Mucosa of descending colon (tissue), 3 donors: ENCODE measurements at regions of chr10 and their contacts with region 1.

Region 1: GRCh38 chr10:114876602-114877300 is 55.2 kb downstream of the FHIP2A start:
- DNase-seq: peak in 2 of 3 donors; percentile 64 to 67
- ATAC-seq: peak; percentile 74
- H3K4me3 ChIP-seq: no peak overlapping the region
- H3K4me1 ChIP-seq: peaks cover 6% of the 10 kb centered on the region
- CTCF ChIP-seq: peak; percentile 28

Region 2: GRCh38 chr10:115129752-115130151 is 253.0 kb after region 1 on chr10:
- intact Hi-C with region 1: loop called in 1 of 2 experiments (anchors 10 kb)
- DNase-seq: no peak
- ATAC-seq: no peak
- H3K4me3 ChIP-seq: no peak overlapping the region
- H3K4me1 ChIP-seq: no peaks in the 10 kb centered on the region
- CTCF ChIP-seq: no peak